ENCODE measurements at regions of chr4 and their contacts with region 1.

Region 1: GRCh38 chr4:73187325-73187724 is 71.3 kb downstream of the ANKRD17 start:
- DNase-seq: peak; percentile 53
- ATAC-seq: peak; percentile 63
- H3K4me3 ChIP-seq: no peak overlapping the region
- H3K27ac ChIP-seq: peak overlapping the region; percentile 23; the same call in 1 of the 2 replicates
- H3K4me1 ChIP-seq: peaks cover 1% of the 10 kb centered on the region; the same call in 1 of the 2 replicates
- H3K27me3 ChIP-seq: no peaks in the 10 kb centered on the region
- CTCF ChIP-seq: no peak
- POLR2A ChIP-seq: no peak
- RAD21 ChIP-seq: no peak

Region 2: DNA sequence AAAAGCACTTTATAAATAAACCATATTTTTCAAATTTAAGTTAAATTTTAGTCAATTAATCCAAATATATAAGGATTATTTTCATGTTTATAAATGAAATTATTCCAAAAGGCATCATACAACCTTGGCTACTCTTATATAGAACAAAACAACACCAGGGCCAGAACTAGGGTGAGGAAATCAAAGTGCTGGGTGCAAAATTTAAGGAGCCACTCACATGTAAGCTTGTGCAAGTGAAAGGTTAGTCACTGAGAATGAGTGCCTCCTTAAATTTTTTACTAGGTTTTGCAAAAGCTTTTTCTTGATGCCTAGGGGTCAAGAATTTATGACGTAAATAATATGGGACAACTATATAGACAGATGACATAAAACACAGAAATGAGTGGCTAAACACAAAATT is 34.4 kb before region 1 on chr4:
- CTCF ChIA-PET with region 1: interaction called, 11 read pairs
- POLR2A ChIA-PET with region 1: no interaction called
- dilution Hi-C with region 1: no loop called
- in situ Hi-C with region 1: no loop called
- intact Hi-C with region 1: no loop called
- DNase-seq: no peak
- ATAC-seq: no peak
- H3K4me3 ChIP-seq: no peak overlapping the region
- H3K27ac ChIP-seq: no peak overlapping the region
- H3K4me1 ChIP-seq: no peaks in the 10 kb centered on the region
- H3K27me3 ChIP-seq: no peaks in the 10 kb centered on the region
- CTCF ChIP-seq: no peak
- POLR2A ChIP-seq: no peak
- RAD21 ChIP-seq: no peak

Region 3: GRCh38 chr4:73170507-73171167 is 16.7 kb before region 1 on chr4:
- CTCF ChIA-PET with region 1: no interaction called
- POLR2A ChIA-PET with region 1: no interaction called
- dilution Hi-C with region 1: no loop called
- in situ Hi-C with region 1: no loop called
- intact Hi-C with region 1: loop called (anchors 1 kb)
- DNase-seq: no peak
- ATAC-seq: no peak
- H3K4me3 ChIP-seq: no peak overlapping the region
- H3K27ac ChIP-seq: no peak overlapping the region
- H3K4me1 ChIP-seq: no peaks in the 10 kb centered on the region
- H3K27me3 ChIP-seq: no peaks in the 10 kb centered on the region
- CTCF ChIP-seq: no peak
- POLR2A ChIP-seq: no peak
- RAD21 ChIP-seq: no peak

Measured in IMR-90 (cell line).